Mammary epithelial cell (primary cell): ENCODE measurements at regions of chr1 and their contacts with region 1.

Region 1: DNA sequence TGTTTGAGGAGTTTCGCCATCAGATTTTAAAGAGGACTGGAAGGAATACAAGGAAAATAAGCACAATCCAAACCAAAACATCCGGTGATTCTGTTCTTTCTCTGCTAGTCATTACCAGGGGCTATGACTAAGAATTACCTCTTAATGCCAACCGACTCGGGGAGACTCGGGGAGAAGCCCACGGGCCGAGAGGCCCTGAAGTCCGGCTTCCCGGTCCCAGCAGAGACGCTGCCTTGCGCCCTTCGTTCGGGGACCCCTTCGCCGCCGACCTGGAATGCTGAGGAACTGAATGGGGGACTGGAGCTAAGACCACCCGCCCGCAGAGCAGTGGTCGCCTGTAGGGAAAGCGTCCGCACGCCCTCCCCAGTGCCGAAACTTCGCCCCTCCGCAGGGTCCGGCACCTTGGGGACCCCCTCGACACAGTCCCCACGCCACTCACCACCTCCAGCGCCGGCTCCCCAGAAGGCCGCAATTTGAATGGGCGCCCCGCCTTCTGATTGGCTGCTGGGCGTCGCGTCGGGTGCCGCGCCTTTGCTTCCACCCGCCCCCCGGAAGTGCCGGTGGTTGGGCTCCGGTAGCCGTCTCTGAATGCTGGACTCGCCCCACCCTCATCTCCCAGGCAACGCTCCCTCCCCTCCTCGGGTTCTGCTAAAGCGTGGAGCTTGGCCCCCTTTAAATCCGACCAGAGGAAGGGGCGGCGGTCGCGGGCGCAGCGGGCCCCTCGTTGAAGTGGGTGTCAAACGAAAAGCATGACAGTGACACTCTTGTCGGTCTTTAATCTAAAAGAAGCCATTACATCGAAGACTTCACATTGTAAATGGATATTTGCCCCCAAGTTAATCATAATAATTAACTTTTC is at the start of gene KIF14:
- DNase-seq: peak; percentile 87
- H3K4me3 ChIP-seq: peak within 1 kb of the TSS; percentile 81 to 98 (median 93)
- H3K27ac ChIP-seq: peak within 1 kb of the TSS; percentile 97
- H3K4me1 ChIP-seq: peaks cover 17% of the 10 kb centered on the region
- H3K27me3 ChIP-seq: no peaks in the 10 kb centered on the region
- CTCF ChIP-seq: no peak
- total RNA-seq, gene KIF14: 0.67 to 11.7 TPM

Region 2: DNA sequence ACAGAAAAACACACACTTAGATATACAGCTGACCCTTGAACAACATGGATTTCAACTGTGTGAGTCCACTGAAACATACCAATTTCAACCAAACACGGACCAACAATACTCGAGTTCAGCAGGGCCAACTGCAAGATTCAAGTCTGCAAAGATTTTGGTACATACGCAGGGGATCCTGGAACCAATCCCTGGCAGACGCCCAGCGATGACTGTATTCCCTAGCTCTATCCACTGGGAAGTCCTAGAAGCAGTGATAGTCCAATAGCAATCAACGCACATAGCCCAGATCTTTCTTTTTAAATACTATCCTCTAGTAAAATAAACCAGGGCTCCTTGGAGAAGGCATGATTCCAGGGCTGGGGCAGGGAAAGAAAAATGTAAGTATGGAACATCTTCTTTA is 40.2 kb after region 1 on chr1:
- CTCF ChIA-PET with region 1: interaction called, 4 read pairs
- dilution Hi-C with region 1: loop called (anchors 5 kb)
- in situ Hi-C with region 1: no loop called
- intact Hi-C with region 1: loop called (anchors 1 kb)
- DNase-seq: no peak
- H3K4me3 ChIP-seq: no peak overlapping the region
- H3K27ac ChIP-seq: peak overlapping the region; percentile 98
- H3K4me1 ChIP-seq: peaks cover 34% of the 10 kb centered on the region
- H3K27me3 ChIP-seq: no peaks in the 10 kb centered on the region
- CTCF ChIP-seq: no peak

Region 3: GRCh38 chr1:200738740-200739498 is 118.4 kb after region 1 on chr1 and contains the start of gene CAMSAP2:
- CTCF ChIA-PET with region 1: no interaction called
- dilution Hi-C with region 1: no loop called
- in situ Hi-C with region 1: no loop called
- intact Hi-C with region 1: loop called (anchors 1 kb)
- DNase-seq: peak; percentile 85
- H3K4me3 ChIP-seq: peak within 1 kb of the TSS; percentile 90 to 94 (median 93)
- H3K27ac ChIP-seq: peak within 1 kb of the TSS; percentile 88
- H3K4me1 ChIP-seq: peaks cover 10% of the 10 kb centered on the region
- H3K27me3 ChIP-seq: no peaks in the 10 kb centered on the region
- CTCF ChIP-seq: no peak
- total RNA-seq, gene CAMSAP2: 79.7 to 118 TPM

Region 4: GRCh38 chr1:200774735-200775444 is 154.4 kb after region 1 on chr1:
- CTCF ChIA-PET with region 1: no interaction called
- dilution Hi-C with region 1: loop called (anchors 5 kb)
- in situ Hi-C with region 1: no loop called
- intact Hi-C with region 1: loop called (anchors 10 kb)
- DNase-seq: no peak
- H3K4me3 ChIP-seq: no peak overlapping the region
- H3K27ac ChIP-seq: no peak overlapping the region
- H3K4me1 ChIP-seq: peaks cover 16% of the 10 kb centered on the region
- H3K27me3 ChIP-seq: no peaks in the 10 kb centered on the region
- CTCF ChIP-seq: no peak

Region 5: GRCh38 chr1:200786788-200787187 is 166.3 kb after region 1 on chr1:
- CTCF ChIA-PET with region 1: no interaction called
- dilution Hi-C with region 1: no loop called
- in situ Hi-C with region 1: no loop called
- intact Hi-C with region 1: no loop called
- DNase-seq: no peak
- H3K4me3 ChIP-seq: no peak overlapping the region
- H3K27ac ChIP-seq: no peak overlapping the region
- H3K4me1 ChIP-seq: no peaks in the 10 kb centered on the region
- H3K27me3 ChIP-seq: no peaks in the 10 kb centered on the region
- CTCF ChIP-seq: no peak

Region 6: GRCh38 chr1:200802865-200803512 is 182.5 kb after region 1 on chr1:
- CTCF ChIA-PET with region 1: no interaction called
- dilution Hi-C with region 1: no loop called
- in situ Hi-C with region 1: loop called (anchors 10 kb)
- intact Hi-C with region 1: loop called (anchors 1 kb)
- DNase-seq: peak; percentile 57
- H3K4me3 ChIP-seq: no peak overlapping the region
- H3K27ac ChIP-seq: no peak overlapping the region
- H3K4me1 ChIP-seq: no peaks in the 10 kb centered on the region
- H3K27me3 ChIP-seq: no peaks in the 10 kb centered on the region
- CTCF ChIP-seq: peak; percentile 95 to 96

Region 7: GRCh38 chr1:200837931-200838571 is 217.5 kb after region 1 on chr1:
- CTCF ChIA-PET with region 1: interaction called, 3 read pairs
- dilution Hi-C with region 1: no loop called
- in situ Hi-C with region 1: no loop called
- intact Hi-C with region 1: loop called (anchors 5 kb)
- DNase-seq: no peak
- H3K4me3 ChIP-seq: no peak overlapping the region
- H3K27ac ChIP-seq: no peak overlapping the region
- H3K4me1 ChIP-seq: peaks cover 14% of the 10 kb centered on the region
- H3K27me3 ChIP-seq: no peaks in the 10 kb centered on the region
- CTCF ChIP-seq: peak; percentile 39 to 46

Region 8: DNA sequence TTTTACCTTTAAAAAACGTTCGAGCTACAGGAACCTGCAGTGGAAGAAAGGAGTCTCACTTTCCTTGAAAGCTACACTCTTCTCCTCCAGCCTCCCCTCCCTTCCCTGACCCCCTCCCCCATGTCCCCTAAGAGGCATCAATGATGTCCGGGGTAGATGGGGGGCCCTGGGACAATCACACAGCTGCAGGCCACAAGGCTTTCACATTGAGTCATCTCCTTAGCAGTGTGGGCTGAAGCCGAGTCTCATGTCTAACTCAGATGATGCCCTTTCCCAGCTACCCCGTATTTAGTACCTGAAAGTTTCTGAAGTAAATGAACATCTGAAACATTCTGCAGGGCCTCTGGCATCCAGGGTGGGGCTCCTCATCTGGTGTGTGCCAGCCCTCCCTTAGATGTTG is 246.0 kb after region 1 on chr1:
- CTCF ChIA-PET with region 1: no interaction called
- dilution Hi-C with region 1: no loop called
- in situ Hi-C with region 1: no loop called
- intact Hi-C with region 1: loop called (anchors 5 kb)
- DNase-seq: no peak
- H3K4me3 ChIP-seq: no peak overlapping the region
- H3K27ac ChIP-seq: no peak overlapping the region
- H3K4me1 ChIP-seq: no peaks in the 10 kb centered on the region
- H3K27me3 ChIP-seq: no peaks in the 10 kb centered on the region
- CTCF ChIP-seq: no peak